ENCODE measurements at regions of chr6 and their contacts with region 1.

Region 1: GRCh38 chr6:51559059-51559458 is 528.4 kb downstream of the PKHD1 start:
- DNase-seq: no peak
- H3K4me3 ChIP-seq: no peak overlapping the region
- H3K27ac ChIP-seq: no peak overlapping the region
- H3K4me1 ChIP-seq: 0 out of 7 replicates have a peak, but pooled peaks cover 0 to under 1% (median 0%) of the 10 kb centered on the region in 4 experiments
- H3K27me3 ChIP-seq: no peaks in the 10 kb centered on the region
- CTCF ChIP-seq: peak in 1 of 3 experiments; percentile 47; a peak in 1 of 4 replicates
- EP300 ChIP-seq: no peak
- POLR2A ChIP-seq: no peak
- RAD21 ChIP-seq: peak; percentile 54 to 64

Region 2: GRCh38 chr6:51513891-51514747 is 44.9 kb before region 1 on chr6:
- CTCF ChIA-PET with region 1: no interaction called
- POLR2A ChIA-PET with region 1: no interaction called
- DNase-seq: no peak
- H3K4me3 ChIP-seq: no peak overlapping the region
- H3K27ac ChIP-seq: no peak overlapping the region
- H3K4me1 ChIP-seq: no peaks in the 10 kb centered on the region
- H3K27me3 ChIP-seq: no peaks in the 10 kb centered on the region
- CTCF ChIP-seq: no peak
- EP300 ChIP-seq: no peak
- POLR2A ChIP-seq: no peak
- RAD21 ChIP-seq: no peak

Region 3: DNA sequence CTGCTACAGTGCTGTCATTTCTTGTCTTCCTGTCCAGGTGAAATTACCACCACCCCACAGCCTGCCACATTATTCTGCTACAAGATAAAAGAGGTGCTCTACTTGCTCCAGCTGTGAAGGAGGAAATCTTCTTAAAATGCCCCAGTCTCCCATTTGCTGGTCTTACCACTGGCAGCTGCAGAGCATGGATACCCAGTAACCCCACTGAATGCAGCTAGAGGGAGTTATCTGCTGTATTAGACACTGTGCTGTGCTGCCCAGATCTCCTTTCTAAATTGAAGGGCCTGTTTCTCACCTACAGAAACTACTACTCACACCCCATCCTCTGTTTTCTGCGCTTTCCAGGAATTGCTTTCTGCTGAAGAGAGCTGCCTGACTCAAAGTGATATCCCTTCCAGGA is 10.5 kb after region 1 on chr6:
- CTCF ChIA-PET with region 1: interaction called, 15 read pairs
- POLR2A ChIA-PET with region 1: no interaction called
- DNase-seq: no peak
- H3K4me3 ChIP-seq: no peak overlapping the region
- H3K27ac ChIP-seq: no peak overlapping the region
- H3K4me1 ChIP-seq: no peaks in the 10 kb centered on the region
- H3K27me3 ChIP-seq: peaks cover 0 to 1% (median 0%) of the 10 kb centered on the region in 4 experiments; a peak in 1 of 7 replicates
- CTCF ChIP-seq: peak; percentile 12 to 63 (median 54)
- EP300 ChIP-seq: no peak
- POLR2A ChIP-seq: no peak
- RAD21 ChIP-seq: peak; percentile 49 to 64

Measured in H1 (cell line).